ENCODE measurements at regions of chr20 and their contacts with region 1.

Region 1: GRCh38 chr20:40990542-40991120 is 38.0 kb upstream of the TOP1 start:
- DNase-seq: peak; percentile 88

Region 2: DNA sequence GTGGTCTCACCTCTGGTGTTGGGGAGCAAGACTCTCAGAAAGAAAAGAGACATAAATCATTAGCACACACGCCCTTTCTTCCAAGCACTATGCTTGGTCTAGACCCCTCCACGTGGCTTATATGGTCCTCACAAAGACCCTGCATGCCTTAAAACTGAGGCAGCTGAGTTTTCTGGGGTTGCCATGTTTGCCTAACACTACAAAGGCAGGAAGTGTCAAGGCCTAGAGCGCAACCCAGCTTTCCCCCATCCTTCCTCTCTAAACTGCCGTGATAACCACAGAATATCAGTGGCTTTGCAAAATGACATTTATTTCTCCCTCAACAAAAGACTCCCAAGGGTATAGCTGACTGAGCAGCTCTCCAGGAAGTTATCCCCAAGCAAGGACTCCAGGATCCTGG is 108.5 kb before region 1 on chr20:
- CTCF ChIA-PET with region 1: no interaction called
- POLR2A ChIA-PET with region 1: no interaction called
- DNase-seq: no peak

Region 3: DNA sequence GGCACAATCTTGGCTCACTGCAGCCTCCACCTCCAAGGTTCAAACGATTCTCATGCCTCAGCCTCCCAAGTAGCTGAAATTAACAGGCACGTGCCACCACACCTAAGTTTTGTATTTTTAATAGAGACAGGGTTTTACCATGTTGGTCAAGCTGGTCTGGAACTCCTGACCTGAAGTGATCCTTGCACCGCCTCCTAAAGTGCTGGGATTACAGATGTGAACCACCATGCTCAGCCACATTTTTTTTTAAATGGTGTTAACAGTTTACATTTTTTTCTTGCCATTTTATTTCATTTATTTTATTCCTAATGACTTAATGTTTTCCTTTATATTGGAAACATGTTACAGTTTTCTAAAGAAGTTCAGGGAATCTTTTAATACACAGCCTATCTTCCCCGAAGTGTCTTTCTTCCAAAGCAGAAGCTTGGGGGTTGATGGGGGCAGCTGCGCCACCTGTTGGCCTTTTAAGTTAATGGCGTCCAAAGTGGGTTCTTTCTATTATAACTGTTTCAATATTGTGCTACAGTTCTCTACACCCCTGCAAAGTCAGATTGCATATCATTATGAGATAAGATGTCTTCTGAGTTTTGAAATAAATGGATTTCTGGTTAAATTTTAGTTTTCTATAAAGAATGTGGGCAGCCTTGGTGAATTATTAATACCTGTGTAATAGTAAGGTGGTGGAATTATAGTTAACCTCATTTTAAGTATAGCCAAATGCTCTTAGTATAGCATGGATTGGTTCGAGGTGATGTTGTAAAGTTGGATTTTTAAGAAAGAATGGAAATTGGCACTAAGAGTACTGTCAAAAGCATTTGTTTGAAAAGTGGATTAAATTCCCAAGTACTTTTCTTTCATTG is 104.7 kb after region 1 on chr20:
- CTCF ChIA-PET with region 1: interaction called, 21 read pairs
- POLR2A ChIA-PET with region 1: no interaction called
- DNase-seq: peak; percentile 60

Region 4: GRCh38 chr20:41161886-41162285 is 171.3 kb after region 1 on chr20:
- CTCF ChIA-PET with region 1: no interaction called
- POLR2A ChIA-PET with region 1: no interaction called
- DNase-seq: no peak

Measured in HEK293T (cell line).